ENCODE measurements at regions of chr9 and their contacts with region 1.

Region 1: DNA sequence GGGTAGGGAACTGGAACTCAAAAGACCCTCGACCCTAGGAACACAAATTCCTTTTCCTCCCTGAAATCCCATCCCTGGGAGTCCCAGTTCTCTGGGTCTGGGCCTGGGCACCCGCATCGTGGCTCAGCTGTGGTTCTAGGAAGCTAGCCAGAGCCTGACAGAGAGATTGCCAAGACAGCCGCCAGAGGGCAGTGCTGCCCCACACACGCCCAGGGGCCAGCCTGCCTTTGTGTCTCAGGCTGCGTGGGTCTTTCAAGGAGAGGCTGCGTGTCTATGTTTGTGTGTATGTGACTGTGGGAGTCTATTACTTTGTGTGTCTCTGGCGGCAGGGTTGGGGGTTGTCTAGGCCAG is 32.0 kb upstream of the TTLL11 start:
- DNase-seq: peak; percentile 84
- H3K4me3 Mint-ChIP-seq: no peak overlapping the region
- H3K27ac Mint-ChIP-seq: no peak overlapping the region
- H3K4me1 Mint-ChIP-seq: peaks cover 11% of the 10 kb centered on the region
- H3K27me3 Mint-ChIP-seq: peaks cover 22% of the 10 kb centered on the region

Region 2: GRCh38 chr9:121545875-121546423 is 579.2 kb before region 1 on chr9:
- CTCF ChIA-PET with region 1: no interaction called
- intact Hi-C with region 1: loop called (anchors 10 kb)
- DNase-seq: peak; percentile 80
- H3K4me3 Mint-ChIP-seq: no peak overlapping the region
- H3K27ac Mint-ChIP-seq: no peak overlapping the region
- H3K4me1 Mint-ChIP-seq: peaks cover under 1% of the 10 kb centered on the region
- H3K27me3 Mint-ChIP-seq: peaks cover 27% of the 10 kb centered on the region

Region 3: GRCh38 chr9:122087406-122088200 is 37.5 kb before region 1 on chr9:
- CTCF ChIA-PET with region 1: interaction called, 10 read pairs
- intact Hi-C with region 1: no loop called
- DNase-seq: no peak
- H3K4me3 Mint-ChIP-seq: no peak overlapping the region
- H3K27ac Mint-ChIP-seq: no peak overlapping the region
- H3K4me1 Mint-ChIP-seq: peaks cover 27% of the 10 kb centered on the region
- H3K27me3 Mint-ChIP-seq: no peaks in the 10 kb centered on the region

Region 4: DNA sequence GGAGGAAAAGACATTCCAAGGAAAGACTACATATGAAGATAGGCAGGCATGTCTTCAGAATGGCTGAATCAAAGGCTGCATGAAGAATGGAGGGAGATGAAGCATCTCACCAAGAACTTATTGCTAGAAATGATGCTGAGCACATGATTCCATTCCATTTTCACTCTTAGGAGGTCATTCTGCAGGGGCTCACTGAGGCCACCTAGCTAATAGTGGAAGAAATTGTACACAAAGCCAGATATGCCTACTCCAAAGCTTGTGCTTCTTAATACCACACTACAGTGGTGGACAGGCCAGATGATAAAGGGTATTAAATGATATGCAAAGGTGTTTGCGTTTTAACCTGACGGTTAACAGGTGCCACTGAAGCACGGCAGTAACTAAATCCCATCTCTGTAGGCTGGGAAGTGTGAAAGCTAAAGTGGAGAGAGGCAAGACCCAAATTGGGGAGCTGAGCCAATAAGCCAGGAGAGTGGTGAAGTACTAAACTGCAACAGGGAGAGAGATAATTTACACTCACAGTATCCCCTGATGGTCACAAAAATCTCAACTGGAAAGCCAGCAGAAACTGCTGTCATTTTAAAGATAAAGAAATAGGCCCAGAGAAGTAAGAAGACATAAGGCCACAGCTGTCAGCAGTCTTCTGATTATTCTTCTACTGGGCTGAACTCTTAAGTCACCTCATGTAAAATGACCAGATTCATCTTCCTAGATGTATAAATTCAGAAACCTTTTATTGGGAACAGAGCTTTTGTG is 19.9 kb after region 1 on chr9:
- CTCF ChIA-PET with region 1: interaction called, 12 read pairs
- intact Hi-C with region 1: no loop called
- DNase-seq: no peak
- H3K4me3 Mint-ChIP-seq: no peak overlapping the region
- H3K27ac Mint-ChIP-seq: no peak overlapping the region
- H3K4me1 Mint-ChIP-seq: peaks cover 1% of the 10 kb centered on the region
- H3K27me3 Mint-ChIP-seq: no peaks in the 10 kb centered on the region

Region 5: DNA sequence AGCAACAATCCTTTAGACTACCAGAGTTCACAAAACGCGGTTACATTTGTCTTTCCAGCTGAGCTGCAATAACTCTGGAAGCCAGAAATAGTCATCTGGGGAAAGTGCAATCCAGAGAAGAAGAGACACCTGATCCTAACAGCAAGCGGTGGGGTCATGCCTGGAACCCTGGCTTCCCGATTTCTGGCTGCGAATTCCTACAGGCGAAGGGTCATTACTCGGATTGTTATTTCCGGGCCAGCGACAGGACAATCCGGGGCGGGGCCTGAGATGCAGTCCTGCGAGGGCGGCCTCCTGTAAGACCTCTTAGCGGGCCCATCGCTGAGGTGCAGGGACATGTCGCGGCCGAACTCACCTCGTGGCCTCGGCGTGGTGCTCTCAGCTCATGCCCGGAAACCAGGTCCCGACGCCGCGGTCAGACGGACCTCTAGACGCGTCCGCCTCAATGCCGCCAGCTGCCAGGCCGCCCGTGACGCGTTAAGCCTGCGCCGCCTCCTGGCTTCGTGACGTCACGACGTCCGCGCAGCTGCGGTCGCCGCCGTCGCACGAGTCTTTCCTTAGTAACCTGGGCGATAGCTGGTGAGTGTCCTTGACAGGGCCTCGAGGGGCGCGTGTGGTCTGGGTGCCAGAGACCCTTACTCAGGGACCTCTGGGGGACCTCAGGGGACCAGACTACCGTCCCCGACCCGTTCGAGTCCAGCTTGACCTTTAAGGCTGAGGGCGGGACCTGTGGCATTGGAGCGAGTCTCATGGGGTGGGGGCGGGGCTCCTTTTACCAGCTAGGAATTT is 139.4 kb after region 1 on chr9 and contains the starts of genes MRRF and RBM18:
- CTCF ChIA-PET with region 1: interaction called, 3 read pairs
- intact Hi-C with region 1: loop called (anchors 2 kb)
- DNase-seq: peak; percentile 90
- H3K4me3 Mint-ChIP-seq: peak within 1 kb of the TSS; percentile 97
- H3K27ac Mint-ChIP-seq: peak within 1 kb of the TSS; percentile 96
- H3K4me1 Mint-ChIP-seq: peaks cover 42% of the 10 kb centered on the region
- H3K27me3 Mint-ChIP-seq: no peaks in the 10 kb centered on the region
- total RNA-seq, gene MRRF: 51.0 TPM
- total RNA-seq, gene RBM18: 25.8 to 25.9 TPM

Region 6: DNA sequence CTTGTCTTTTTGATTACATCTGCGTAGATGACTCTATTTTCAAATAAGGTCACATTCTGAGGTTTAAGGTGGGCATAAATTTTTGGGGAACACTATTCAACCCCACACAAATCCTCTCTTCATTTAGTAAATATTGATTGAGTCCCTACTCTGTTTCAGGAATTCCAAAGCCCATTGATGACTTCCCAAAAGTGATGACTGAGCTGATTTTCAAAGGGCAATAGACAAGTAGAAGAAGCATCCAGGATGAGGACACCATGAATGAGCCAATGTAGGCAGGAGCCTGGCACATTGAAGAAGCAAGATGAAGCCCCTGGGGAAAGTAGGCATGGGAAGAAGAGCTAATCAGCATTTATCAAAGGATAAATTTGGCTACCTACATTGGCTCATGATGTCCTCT is 317.4 kb after region 1 on chr9:
- CTCF ChIA-PET with region 1: no interaction called
- intact Hi-C with region 1: no loop called
- DNase-seq: no peak
- H3K4me3 Mint-ChIP-seq: no peak overlapping the region
- H3K27ac Mint-ChIP-seq: no peak overlapping the region
- H3K4me1 Mint-ChIP-seq: no peaks in the 10 kb centered on the region
- H3K27me3 Mint-ChIP-seq: peaks cover 14% of the 10 kb centered on the region

Region 7: GRCh38 chr9:122453677-122454135 is 328.6 kb after region 1 on chr9:
- CTCF ChIA-PET with region 1: interaction called, 3 read pairs
- intact Hi-C with region 1: loop called (anchors 1 kb)
- DNase-seq: no peak
- H3K4me3 Mint-ChIP-seq: no peak overlapping the region
- H3K27ac Mint-ChIP-seq: no peak overlapping the region
- H3K4me1 Mint-ChIP-seq: no peaks in the 10 kb centered on the region
- H3K27me3 Mint-ChIP-seq: peaks cover 11% of the 10 kb centered on the region

Region 8: DNA sequence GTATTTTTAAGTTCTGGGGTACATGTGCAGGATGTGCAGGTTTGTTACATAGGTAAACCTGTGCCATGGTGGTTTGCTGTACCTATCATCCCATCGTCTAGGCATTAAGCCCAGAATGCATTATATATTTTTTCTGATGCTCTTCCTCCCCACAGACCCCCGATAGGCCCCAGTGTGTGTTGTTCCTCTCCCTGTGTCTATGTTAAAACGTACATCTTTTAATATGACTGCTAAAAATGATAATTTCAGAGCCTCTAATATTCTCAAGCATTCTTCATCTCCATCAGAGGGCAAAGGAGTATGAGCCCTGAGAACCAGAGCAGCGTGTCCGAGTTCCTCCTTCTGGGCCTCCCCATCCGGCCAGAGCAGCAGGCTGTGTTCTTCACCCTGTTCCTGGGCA is 385.4 kb after region 1 on chr9 and contains the start of gene OR1J2:
- CTCF ChIA-PET with region 1: no interaction called
- intact Hi-C with region 1: no loop called
- DNase-seq: no peak
- H3K4me3 Mint-ChIP-seq: no peak within 1 kb of the TSS
- H3K27ac Mint-ChIP-seq: no peak within 1 kb of the TSS
- H3K4me1 Mint-ChIP-seq: no peaks in the 10 kb centered on the region
- H3K27me3 Mint-ChIP-seq: peaks cover 22% of the 10 kb centered on the region
- total RNA-seq, gene OR1J2: not detected

Region 9: GRCh38 chr9:122810306-122810946 is 685.3 kb after region 1 on chr9:
- CTCF ChIA-PET with region 1: interaction called, 7 read pairs
- intact Hi-C with region 1: loop called (anchors 1 kb)
- DNase-seq: peak; percentile 87
- H3K4me3 Mint-ChIP-seq: no peak overlapping the region
- H3K27ac Mint-ChIP-seq: no peak overlapping the region
- H3K4me1 Mint-ChIP-seq: peaks cover 20% of the 10 kb centered on the region
- H3K27me3 Mint-ChIP-seq: no peaks in the 10 kb centered on the region

Measured in activated naive CD4-positive, alpha-beta T cell treated with anti-CD3 and anti-CD28 coated beads for 36 hours (primary cell).